ENCODE measurements at regions of chr12 and their contacts with region 1.

Region 1: DNA sequence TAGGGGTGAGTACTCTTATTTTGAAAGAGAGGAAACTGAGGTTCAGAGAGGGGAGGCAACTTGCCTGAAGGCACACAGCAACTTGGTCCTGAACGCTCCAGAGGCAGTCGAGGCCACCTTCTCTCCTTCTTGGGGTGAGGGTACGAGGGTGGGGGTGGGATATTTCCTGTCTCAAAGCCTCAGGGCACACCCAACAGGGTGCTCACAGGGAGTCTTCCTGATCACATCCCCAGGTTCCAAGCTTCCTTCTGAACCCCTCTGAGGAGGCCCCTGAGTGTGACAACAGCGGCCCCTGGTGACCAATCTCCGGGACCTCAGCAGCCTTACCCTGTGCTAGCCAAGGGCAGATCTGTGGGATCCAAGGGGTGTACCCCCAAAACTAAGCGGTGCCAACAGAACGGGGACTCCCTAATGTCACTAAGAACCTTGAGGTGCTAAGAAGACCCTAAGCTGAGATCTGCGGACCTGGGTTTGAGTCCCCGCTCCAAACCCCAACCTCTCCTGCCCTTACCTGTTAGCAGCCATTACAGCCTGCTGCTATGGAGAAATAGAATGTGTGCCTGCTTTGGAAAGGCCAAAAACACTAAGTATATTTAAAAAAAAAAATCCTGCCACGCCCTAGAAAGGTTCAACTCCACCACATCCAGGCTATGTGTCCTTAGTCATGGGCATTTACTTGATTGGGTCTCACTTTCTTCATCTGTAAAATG is 57.9 kb downstream of the TRPV4 start:
- DNase-seq: peak; percentile 54
- ATAC-seq: peak; percentile 52
- H3K4me3 Mint-ChIP-seq: no peak overlapping the region
- H3K27ac Mint-ChIP-seq: no peak overlapping the region
- H3K4me1 Mint-ChIP-seq: peaks cover 8% of the 10 kb centered on the region
- H3K27me3 Mint-ChIP-seq: no peaks in the 10 kb centered on the region
- CTCF ChIP-seq: no peak

Region 2: GRCh38 chr12:109428037-109428629 is 347.2 kb before region 1 on chr12:
- CTCF ChIA-PET with region 1: interaction called, 24 read pairs
- POLR2A ChIA-PET with region 1: no interaction called
- intact Hi-C with region 1: loop called (anchors 1 kb)
- DNase-seq: peak; percentile 52
- ATAC-seq: peak; percentile 85
- H3K4me3 Mint-ChIP-seq: no peak overlapping the region
- H3K27ac Mint-ChIP-seq: no peak overlapping the region
- H3K4me1 Mint-ChIP-seq: peaks cover 6% of the 10 kb centered on the region
- H3K27me3 Mint-ChIP-seq: peaks cover 9% of the 10 kb centered on the region
- CTCF ChIP-seq: peak; percentile 79

Region 3: DNA sequence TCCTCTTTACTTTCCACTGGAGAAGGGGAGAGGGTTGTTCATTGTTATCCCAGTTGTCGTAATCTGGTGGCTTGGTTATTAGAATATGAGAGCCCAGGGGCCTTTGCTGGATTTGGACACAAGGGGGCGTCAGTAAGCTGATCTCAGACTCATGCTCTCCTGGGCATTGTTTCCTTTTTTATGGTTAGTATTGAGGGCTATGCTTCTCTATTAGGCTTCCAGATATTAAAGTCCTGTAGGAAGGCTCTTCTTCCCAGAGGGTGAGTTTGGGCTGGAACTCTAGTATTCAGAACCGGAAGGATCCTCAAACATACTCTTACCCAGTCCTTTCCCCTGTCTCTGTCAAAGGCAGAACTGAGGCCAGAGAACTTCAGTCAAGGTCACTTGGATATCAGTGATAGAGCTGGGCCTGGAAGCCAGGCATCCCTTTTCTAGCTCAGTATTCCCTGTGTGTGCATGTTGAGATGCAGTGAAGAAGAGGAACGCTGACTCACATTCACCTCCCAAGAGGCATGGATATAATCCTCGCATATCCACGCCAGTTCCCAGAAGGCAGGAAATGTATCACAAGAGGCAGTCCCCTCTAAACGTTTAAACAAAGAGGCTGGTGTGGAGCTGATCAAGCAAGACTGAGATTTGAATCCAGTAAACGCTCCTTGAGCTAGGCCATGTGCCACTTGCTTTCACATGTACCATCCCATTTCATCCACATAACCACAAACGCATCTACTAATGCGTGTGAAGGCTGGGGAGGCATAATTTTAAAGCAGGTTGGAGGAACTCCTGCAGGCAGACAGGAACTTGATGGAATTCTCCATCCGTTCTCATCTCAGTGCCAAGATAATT is 256.3 kb before region 1 on chr12:
- CTCF ChIA-PET with region 1: interaction called, 34 read pairs
- POLR2A ChIA-PET with region 1: interaction called, 3 read pairs
- intact Hi-C with region 1: no loop called
- DNase-seq: no peak
- ATAC-seq: no peak
- H3K4me3 Mint-ChIP-seq: no peak overlapping the region
- H3K27ac Mint-ChIP-seq: no peak overlapping the region
- H3K4me1 Mint-ChIP-seq: no peaks in the 10 kb centered on the region
- H3K27me3 Mint-ChIP-seq: no peaks in the 10 kb centered on the region
- CTCF ChIP-seq: no peak

Region 4: GRCh38 chr12:109597795-109598427 is 177.4 kb before region 1 on chr12:
- CTCF ChIA-PET with region 1: interaction called, 49 read pairs
- POLR2A ChIA-PET with region 1: no interaction called
- intact Hi-C with region 1: no loop called
- DNase-seq: peak; percentile 48
- ATAC-seq: peak; percentile 65
- H3K4me3 Mint-ChIP-seq: no peak overlapping the region
- H3K27ac Mint-ChIP-seq: no peak overlapping the region
- H3K4me1 Mint-ChIP-seq: peaks cover 8% of the 10 kb centered on the region
- H3K27me3 Mint-ChIP-seq: no peaks in the 10 kb centered on the region
- CTCF ChIP-seq: peak; percentile 66

Region 5: DNA sequence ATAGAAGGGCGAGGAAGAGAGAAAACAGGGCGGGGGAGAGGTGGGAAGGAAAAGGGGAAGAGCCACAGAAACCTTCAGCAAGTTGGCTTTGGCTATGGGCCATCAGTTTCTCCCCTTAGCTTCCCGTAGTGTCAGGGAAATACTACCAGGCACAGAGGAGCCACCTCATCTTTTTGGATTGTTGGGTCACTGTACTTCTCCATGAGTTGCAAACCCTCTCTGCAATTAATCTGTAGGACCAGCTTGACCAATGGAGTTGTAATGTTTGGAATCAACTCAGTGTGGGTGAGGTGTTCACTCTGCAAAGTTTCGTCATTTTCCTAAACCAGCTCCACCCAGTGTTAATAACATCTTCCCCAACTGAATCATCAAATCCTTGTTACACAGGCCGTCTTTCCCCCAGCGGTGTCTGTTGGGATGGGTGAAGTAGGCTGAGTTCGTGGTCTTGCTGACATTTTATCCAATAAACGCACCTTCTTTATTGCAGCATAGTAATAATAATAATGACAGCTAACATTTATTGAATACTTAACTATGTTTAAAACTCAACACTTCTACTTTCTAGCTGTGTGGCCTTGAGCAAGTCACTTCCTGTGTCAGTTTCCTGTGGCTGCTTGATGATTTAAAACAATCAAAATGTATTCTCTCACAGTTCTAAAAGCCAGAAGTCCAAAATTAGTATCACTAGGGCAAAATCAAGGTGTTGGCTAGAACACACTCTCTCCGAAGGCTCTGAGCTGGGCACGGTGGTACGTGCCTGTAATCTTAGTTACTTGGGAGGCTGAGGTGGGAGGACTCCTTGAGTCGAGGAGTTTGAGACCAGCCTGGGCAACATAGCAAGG is 113.1 kb after region 1 on chr12:
- CTCF ChIA-PET with region 1: no interaction called
- POLR2A ChIA-PET with region 1: no interaction called
- intact Hi-C with region 1: no loop called
- DNase-seq: no peak
- ATAC-seq: peak; percentile 58
- H3K4me3 Mint-ChIP-seq: peak overlapping the region; percentile 63
- H3K27ac Mint-ChIP-seq: peak overlapping the region; percentile 95
- H3K4me1 Mint-ChIP-seq: peaks cover 54% of the 10 kb centered on the region
- H3K27me3 Mint-ChIP-seq: no peaks in the 10 kb centered on the region
- CTCF ChIP-seq: no peak